ENCODE measurements at regions of chrX and their contacts with region 1.

Region 1: DNA sequence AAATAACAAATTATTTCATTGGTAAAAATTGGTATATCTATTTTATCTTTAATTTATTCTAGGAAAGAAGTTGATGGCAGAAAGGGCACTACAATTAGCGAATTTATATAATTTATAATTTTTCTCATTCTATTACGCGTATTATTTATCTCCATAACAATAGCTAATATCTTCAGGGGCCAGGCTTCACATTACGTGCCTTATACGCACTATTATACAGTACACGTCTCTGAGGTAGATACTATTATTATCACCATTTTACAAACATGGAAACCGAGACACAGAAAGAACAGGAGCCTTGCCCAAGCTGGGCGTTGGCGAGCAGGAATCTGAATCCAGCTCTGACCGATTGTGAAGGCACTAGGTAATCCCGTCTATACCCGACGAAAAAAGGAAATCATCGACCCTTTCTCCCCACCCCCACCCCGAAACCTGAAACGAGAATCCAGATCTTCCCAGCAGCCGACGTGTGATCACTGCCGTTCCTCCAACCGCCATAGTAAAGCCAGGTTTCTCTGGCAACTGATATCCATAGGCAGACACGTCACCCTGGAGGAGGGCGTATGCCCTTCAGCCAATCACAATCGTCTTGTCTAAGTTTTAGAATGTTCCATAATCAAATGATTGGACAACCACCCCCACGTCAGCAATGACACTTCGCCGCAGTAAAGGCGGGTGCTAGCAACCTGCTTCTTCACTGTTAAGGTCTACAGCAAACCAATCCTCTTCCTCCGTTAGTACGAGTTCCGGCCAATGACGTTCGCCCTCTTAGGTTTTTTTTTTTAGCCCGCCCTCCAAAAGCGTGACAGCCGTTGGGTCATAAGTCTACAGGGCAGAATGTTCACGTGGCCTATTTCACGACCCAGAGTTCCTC is at the start of gene MORF4L2:
- DNase-seq: peak; percentile 42 to 96 (median 89)
- ATAC-seq: peak; percentile 90
- H3K4me3 ChIP-seq: peak within 1 kb of the TSS; percentile 83
- H3K4me3 Mint-ChIP-seq: peak within 1 kb of the TSS in 6 of 10 donors; percentile 69 to 91 (median 82)
- H3K27ac ChIP-seq: peak within 1 kb of the TSS; percentile 94
- H3K27ac Mint-ChIP-seq: peak within 1 kb of the TSS in 5 of 9 donors; percentile 77 to 92 (median 81)
- H3K4me1 ChIP-seq: peaks cover 4 to 13% of the 10 kb centered on the region in 2 donors
- H3K4me1 Mint-ChIP-seq: peaks cover 0 to 23% (median 10%) of the 10 kb centered on the region in 7 donors
- H3K27me3 ChIP-seq: no peaks in the 10 kb centered on the region
- H3K27me3 Mint-ChIP-seq: no peaks in the 10 kb centered on the region
- total RNA-seq, gene MORF4L2: 103 to 177 (median 143) TPM

Region 2: GRCh38 chrX:101931488-101932248 is 1754.8 kb before region 1 on chrX and contains the start of gene ZMAT1:
- CTCF ChIA-PET with region 1: no interaction called
- POLR2A ChIA-PET with region 1: no interaction called
- intact Hi-C with region 1: loop called (anchors 5 kb)
- DNase-seq: peak; percentile 73 to 92 (median 87)
- ATAC-seq: peak; percentile 93
- H3K4me3 ChIP-seq: peak within 1 kb of the TSS; percentile 63
- H3K4me3 Mint-ChIP-seq: peak within 1 kb of the TSS; percentile 80 to 95 (median 88)
- H3K27ac ChIP-seq: peak within 1 kb of the TSS; percentile 89
- H3K27ac Mint-ChIP-seq: peak within 1 kb of the TSS; percentile 87 to 99 (median 96)
- H3K4me1 ChIP-seq: peaks cover 0 to 8% of the 10 kb centered on the region in 2 donors
- H3K4me1 Mint-ChIP-seq: peaks cover 8 to 44% (median 33%) of the 10 kb centered on the region in 7 donors
- H3K27me3 ChIP-seq: no peaks in the 10 kb centered on the region
- H3K27me3 Mint-ChIP-seq: no peaks in the 10 kb centered on the region
- total RNA-seq, gene ZMAT1: 3.0 to 48.3 (median 32.2) TPM

Region 3: DNA sequence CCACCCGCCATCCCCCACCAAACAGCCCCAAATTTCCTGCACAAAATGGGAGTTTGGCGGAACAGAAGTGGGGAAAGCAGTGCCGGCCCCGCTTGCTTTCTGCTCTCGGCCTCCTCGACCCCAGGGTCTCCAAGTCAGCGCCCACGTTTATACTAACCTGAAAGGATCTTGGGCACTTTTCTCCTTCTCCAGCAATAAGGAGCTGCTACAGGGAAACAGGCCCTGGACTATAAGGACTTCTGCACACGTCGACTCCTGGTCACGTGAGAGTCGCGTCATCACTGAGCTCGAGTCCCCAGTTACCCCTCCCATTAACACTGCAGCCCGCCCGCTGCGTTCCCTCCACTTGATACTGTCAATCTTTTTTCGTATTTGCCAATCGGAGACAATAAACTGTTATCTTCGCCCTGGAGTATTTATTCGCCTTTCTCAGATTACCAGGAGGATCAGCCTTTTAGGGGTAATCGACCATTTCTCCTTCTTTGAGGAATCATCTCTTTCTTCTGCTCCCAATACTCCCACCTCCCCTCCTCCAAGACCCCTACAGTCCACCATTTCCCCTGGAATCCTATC is 431.4 kb before region 1 on chrX and contains the start of gene TCEAL8:
- CTCF ChIA-PET with region 1: no interaction called
- POLR2A ChIA-PET with region 1: no interaction called
- intact Hi-C with region 1: loop called in 1 of 2 experiments (anchors 10 kb)
- DNase-seq: peak in 8 of 9 donors; percentile 28 to 66 (median 47)
- ATAC-seq: peak; percentile 94
- H3K4me3 ChIP-seq: peak within 1 kb of the TSS; percentile 85
- H3K4me3 Mint-ChIP-seq: peak within 1 kb of the TSS; percentile 92 to 98 (median 96)
- H3K27ac ChIP-seq: peak within 1 kb of the TSS; percentile 85
- H3K27ac Mint-ChIP-seq: peak within 1 kb of the TSS; percentile 87 to 97 (median 94)
- H3K4me1 ChIP-seq: no peaks in the 10 kb centered on the region
- H3K4me1 Mint-ChIP-seq: peaks cover 12 to 33% (median 20%) of the 10 kb centered on the region in 7 donors
- H3K27me3 ChIP-seq: no peaks in the 10 kb centered on the region
- H3K27me3 Mint-ChIP-seq: peaks cover 0 to 11% (median 0%) of the 10 kb centered on the region in 5 donors
- total RNA-seq, gene TCEAL8: 12.2 to 35.0 (median 33.2) TPM

Region 4: DNA sequence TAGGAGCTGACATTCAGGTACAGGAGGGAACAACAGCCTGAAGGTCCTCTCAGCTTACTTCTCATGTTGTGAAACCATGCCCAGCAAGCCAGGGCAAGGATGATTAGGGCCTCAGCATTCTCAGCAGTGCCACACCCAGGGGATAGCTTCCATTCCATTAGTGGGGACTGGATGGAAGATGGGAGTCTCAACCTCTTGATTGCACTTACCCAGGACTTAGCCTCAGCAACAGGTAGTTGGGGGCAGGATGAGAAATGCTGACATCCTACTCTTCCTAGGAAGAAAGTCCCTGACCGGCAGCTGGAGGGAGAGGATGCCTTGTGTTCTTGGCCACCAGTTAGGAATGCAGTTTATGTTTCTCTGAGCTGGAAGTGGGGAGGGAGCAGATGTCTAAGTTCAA is 318.9 kb before region 1 on chrX:
- CTCF ChIA-PET with region 1: no interaction called
- POLR2A ChIA-PET with region 1: no interaction called
- intact Hi-C with region 1: no loop called
- DNase-seq: no peak
- ATAC-seq: no peak
- H3K4me3 ChIP-seq: no peak overlapping the region
- H3K4me3 Mint-ChIP-seq: no peak overlapping the region
- H3K27ac ChIP-seq: no peak overlapping the region
- H3K27ac Mint-ChIP-seq: no peak overlapping the region
- H3K4me1 ChIP-seq: no peaks in the 10 kb centered on the region
- H3K4me1 Mint-ChIP-seq: peaks cover 0 to 1% (median 0%) of the 10 kb centered on the region in 7 donors
- H3K27me3 ChIP-seq: no peaks in the 10 kb centered on the region
- H3K27me3 Mint-ChIP-seq: peaks cover 0 to 5% (median 0%) of the 10 kb centered on the region in 5 donors

Region 5: DNA sequence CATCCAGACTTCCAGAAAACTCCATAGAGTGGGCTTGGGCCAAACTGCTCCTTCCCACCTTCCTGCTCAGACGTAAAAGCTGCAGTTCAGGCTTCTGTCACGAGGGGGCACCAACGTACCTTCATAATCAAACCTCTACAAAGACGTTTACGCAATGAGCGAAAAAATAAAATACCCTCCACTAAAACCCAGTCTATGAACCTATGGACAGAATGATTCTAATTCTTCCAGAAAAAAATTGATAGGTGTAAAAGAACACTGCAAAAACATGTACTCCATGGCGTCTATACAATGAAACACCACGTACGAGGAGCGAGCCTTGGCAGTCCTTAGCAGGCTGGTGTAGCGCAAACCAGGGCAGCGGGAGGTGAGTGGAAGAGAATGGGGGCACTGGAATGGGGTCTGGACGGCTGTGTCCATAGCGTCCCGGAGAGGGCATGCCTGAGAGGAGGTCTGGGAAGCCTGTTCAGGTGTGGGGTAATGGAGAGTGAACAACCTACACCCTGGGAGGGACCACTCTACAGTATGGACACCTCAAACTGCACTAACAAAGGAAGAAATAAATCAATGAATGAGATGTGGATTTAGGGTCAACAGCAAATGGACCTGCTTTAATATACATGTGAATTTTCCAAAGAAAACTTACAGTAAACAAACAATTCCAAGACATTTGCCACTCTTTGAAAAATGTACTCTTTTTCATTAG is 152.8 kb before region 1 on chrX:
- CTCF ChIA-PET with region 1: no interaction called
- POLR2A ChIA-PET with region 1: no interaction called
- intact Hi-C with region 1: loop called (anchors 1 to 5 kb)
- DNase-seq: peak; percentile 29 to 70 (median 53)
- ATAC-seq: peak; percentile 72
- H3K4me3 ChIP-seq: peak overlapping the region; percentile 46
- H3K4me3 Mint-ChIP-seq: peak overlapping the region; percentile 62 to 84 (median 74)
- H3K27ac ChIP-seq: no peak overlapping the region
- H3K27ac Mint-ChIP-seq: peak overlapping the region in 2 of 9 donors; percentile 38 to 73
- H3K4me1 ChIP-seq: no peaks in the 10 kb centered on the region
- H3K4me1 Mint-ChIP-seq: peaks cover 0 to 5% (median 3%) of the 10 kb centered on the region in 7 donors
- H3K27me3 ChIP-seq: no peaks in the 10 kb centered on the region
- H3K27me3 Mint-ChIP-seq: peaks cover 0 to 5% (median 0%) of the 10 kb centered on the region in 5 donors

Region 6: DNA sequence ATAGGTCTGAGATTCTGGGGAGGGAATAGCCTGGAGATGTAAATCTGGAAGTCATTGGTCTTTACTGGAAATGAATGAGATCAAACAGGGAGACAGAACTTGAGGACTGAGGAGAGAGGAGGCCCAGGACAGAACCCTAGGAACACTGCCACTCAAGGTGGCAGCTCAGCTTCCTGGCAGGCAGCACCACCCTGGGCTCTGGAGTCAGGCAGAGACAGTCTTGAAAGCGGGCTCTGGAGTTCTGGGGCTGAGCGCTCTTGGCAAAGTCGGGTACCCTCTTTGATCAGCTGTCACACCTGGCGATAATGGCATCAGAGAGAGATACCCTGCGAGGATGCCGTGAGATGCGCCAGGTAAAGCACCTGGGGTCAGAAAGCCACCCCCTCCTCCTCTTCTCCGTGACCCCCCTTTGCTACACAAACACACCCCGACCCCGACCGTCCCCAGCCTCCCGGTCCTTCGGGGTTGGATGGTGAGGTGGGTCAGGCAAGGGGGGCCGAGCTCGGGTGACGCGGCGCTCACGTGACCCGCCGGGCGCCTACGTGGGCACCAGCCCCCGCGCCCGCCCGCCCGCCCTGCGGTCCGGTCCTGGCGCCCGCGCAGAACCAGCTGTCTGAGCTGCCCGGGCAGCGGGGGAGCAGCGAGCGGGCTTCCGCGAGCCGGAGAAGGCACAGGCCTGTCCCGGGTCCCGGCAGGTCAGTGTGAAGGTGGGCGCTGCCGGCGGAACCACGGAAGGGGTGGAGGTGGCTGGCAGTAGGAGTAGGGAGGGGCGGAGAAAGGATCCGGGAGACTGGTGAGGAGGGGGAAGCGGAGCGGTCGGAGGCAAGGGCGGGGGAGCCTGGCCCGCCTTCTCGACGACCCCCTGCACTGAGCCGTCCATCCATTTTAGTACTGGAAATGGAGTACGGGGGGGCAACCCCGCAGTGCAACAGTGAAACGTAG is 78.8 kb before region 1 on chrX and contains the start of gene TCEAL3:
- CTCF ChIA-PET with region 1: no interaction called
- POLR2A ChIA-PET with region 1: no interaction called
- intact Hi-C with region 1: loop called in 1 of 2 experiments (anchors 5 kb)
- DNase-seq: peak in 7 of 9 donors; percentile 15 to 31 (median 25)
- ATAC-seq: peak; percentile 90
- H3K4me3 ChIP-seq: peak within 1 kb of the TSS; percentile 56
- H3K4me3 Mint-ChIP-seq: peak within 1 kb of the TSS; percentile 47 to 93 (median 82)
- H3K27ac ChIP-seq: peak within 1 kb of the TSS; percentile 74
- H3K27ac Mint-ChIP-seq: peak within 1 kb of the TSS in 8 of 9 donors; percentile 63 to 90 (median 79)
- H3K4me1 ChIP-seq: no peaks in the 10 kb centered on the region
- H3K4me1 Mint-ChIP-seq: peaks cover 0 to 9% (median 7%) of the 10 kb centered on the region in 7 donors
- H3K27me3 ChIP-seq: no peaks in the 10 kb centered on the region
- H3K27me3 Mint-ChIP-seq: peaks cover 0 to 19% (median 0%) of the 10 kb centered on the region in 5 donors
- total RNA-seq, gene TCEAL3: 0.60 to 6.1 (median 4.2) TPM

Region 7: DNA sequence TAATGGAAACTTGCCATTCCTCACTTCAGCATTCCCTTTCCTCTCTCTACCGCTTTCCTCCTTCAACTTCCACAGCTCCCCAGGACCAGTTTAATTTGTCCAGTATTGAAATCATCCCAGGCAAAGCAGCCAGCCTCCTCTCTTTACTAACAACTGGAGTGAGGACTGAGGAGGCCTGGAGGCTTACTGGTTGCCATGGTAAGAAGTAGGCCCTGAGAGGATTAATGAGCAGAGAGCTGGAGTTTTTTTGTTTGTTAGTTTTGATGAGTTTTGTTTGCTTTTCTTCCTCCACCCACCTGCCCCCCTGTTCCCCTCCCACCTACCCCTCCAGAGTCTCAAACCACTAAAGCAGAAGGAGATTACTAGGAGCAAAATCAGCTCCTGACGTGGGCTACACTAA is 60.7 kb after region 1 on chrX:
- CTCF ChIA-PET with region 1: no interaction called
- POLR2A ChIA-PET with region 1: no interaction called
- intact Hi-C with region 1: no loop called
- DNase-seq: no peak
- ATAC-seq: no peak
- H3K4me3 ChIP-seq: no peak overlapping the region
- H3K4me3 Mint-ChIP-seq: no peak overlapping the region
- H3K27ac ChIP-seq: no peak overlapping the region
- H3K27ac Mint-ChIP-seq: no peak overlapping the region
- H3K4me1 ChIP-seq: no peaks in the 10 kb centered on the region
- H3K4me1 Mint-ChIP-seq: no peaks in the 10 kb centered on the region
- H3K27me3 ChIP-seq: no peaks in the 10 kb centered on the region
- H3K27me3 Mint-ChIP-seq: no peaks in the 10 kb centered on the region

Region 8: DNA sequence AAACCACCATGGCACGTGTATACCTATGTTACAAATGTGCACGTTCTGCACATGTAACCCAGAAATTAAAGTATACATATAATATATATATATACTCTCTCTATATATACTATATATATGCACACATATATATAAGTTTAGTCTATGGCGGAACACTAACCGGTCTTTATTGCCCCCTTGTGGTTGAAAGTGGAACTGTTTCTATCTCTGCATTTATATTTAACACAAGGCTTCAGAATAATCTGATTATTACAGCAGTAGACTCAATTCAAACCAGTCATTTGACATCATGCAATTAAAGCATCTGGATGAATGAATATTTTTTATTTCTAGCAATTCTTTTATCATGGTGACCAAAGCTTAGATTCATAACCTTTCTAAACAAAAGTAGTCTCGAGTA is 131.1 kb after region 1 on chrX:
- CTCF ChIA-PET with region 1: no interaction called
- POLR2A ChIA-PET with region 1: no interaction called
- intact Hi-C with region 1: loop called (anchors 1 kb)
- DNase-seq: peak in 7 of 9 donors; percentile 33 to 62 (median 51)
- ATAC-seq: peak; percentile 77
- H3K4me3 ChIP-seq: no peak overlapping the region
- H3K4me3 Mint-ChIP-seq: no peak overlapping the region
- H3K27ac ChIP-seq: no peak overlapping the region
- H3K27ac Mint-ChIP-seq: no peak overlapping the region
- H3K4me1 ChIP-seq: no peaks in the 10 kb centered on the region
- H3K4me1 Mint-ChIP-seq: no peaks in the 10 kb centered on the region
- H3K27me3 ChIP-seq: no peaks in the 10 kb centered on the region
- H3K27me3 Mint-ChIP-seq: peaks cover 0 to 26% (median 8%) of the 10 kb centered on the region in 5 donors

Region 9: DNA sequence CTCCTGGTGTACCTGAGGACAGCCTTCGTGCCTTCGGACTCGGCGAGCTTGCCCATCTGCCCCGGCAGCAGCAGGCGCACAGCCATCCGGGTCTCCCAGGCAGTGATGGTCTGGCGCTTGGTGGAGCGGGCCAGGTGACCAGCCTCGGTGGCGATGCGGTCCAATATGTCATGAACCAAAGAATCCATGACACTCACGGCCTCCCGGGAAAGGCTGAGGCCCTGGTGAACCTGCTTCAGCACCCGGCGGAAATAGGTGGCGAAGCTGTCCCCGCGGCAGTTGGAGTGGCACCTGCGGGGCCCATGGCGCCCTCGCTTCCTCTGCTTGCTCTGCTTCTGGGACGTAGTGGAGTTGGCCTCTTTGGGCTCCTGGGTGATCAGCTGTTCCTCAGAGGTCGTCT is 326.7 kb after region 1 on chrX:
- CTCF ChIA-PET with region 1: no interaction called
- POLR2A ChIA-PET with region 1: no interaction called
- intact Hi-C with region 1: no loop called
- DNase-seq: no peak
- ATAC-seq: no peak
- H3K4me3 ChIP-seq: no peak overlapping the region
- H3K4me3 Mint-ChIP-seq: no peak overlapping the region
- H3K27ac ChIP-seq: no peak overlapping the region
- H3K27ac Mint-ChIP-seq: no peak overlapping the region
- H3K4me1 ChIP-seq: no peaks in the 10 kb centered on the region
- H3K4me1 Mint-ChIP-seq: no peaks in the 10 kb centered on the region
- H3K27me3 ChIP-seq: no peaks in the 10 kb centered on the region
- H3K27me3 Mint-ChIP-seq: peaks cover 0 to 3% (median 0%) of the 10 kb centered on the region in 5 donors

Region 10: DNA sequence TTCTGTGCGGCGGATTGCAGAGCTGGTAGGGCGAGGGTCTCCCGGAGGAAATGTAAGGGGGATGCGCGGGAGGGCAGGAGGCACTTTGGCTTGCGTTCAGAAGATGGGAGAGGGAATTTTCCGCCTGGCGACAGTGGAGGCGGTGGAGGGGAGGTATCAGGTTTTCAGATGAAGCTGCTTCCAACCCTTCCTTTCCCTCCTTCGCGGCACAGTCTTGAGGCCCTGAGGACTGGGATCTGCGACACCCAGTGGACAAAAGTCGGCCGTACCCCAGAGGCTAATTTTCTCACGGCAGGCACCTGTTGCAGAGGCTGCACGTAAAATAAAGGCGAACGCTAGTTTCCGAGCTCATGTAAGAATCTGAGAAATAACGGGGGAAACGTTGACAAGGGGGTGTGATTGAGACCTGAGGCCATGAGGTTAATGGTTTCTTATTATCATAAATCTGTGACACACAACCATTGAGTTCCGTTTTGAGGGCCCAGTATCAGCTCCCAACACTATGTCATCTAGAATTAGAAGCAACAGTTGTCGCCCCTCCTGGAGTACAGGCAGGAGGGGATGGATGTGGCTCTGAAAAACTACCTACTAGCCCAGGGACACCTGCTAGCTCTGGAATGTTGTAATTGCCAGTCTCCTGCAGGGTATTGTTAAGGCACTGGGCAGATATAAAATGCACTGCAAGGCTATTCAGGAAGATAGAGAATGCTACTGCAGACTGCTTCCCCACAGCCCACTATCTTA is 427.0 kb after region 1 on chrX:
- CTCF ChIA-PET with region 1: no interaction called
- POLR2A ChIA-PET with region 1: no interaction called
- intact Hi-C with region 1: loop called in 1 of 2 experiments (anchors 1 kb)
- DNase-seq: peak in 8 of 9 donors; percentile 17 to 43 (median 35)
- ATAC-seq: peak; percentile 71
- H3K4me3 ChIP-seq: peak overlapping the region; percentile 79
- H3K4me3 Mint-ChIP-seq: peak overlapping the region; percentile 74 to 93 (median 90)
- H3K27ac ChIP-seq: peak overlapping the region; percentile 67
- H3K27ac Mint-ChIP-seq: peak overlapping the region; percentile 28 to 81 (median 65)
- H3K4me1 ChIP-seq: peaks cover 17 to 25% of the 10 kb centered on the region in 2 donors
- H3K4me1 Mint-ChIP-seq: peaks cover 0 to 35% (median 27%) of the 10 kb centered on the region in 7 donors
- H3K27me3 ChIP-seq: no peaks in the 10 kb centered on the region
- H3K27me3 Mint-ChIP-seq: peaks cover 0 to 8% (median 0%) of the 10 kb centered on the region in 5 donors

Measured in naive thymus-derived CD4-positive, alpha-beta T cell (primary cell).